Activated CD8-positive, alpha-beta T cell treated with anti-CD3 and anti-CD28 coated beads, Interleukin-2, amount 10 ng/mL, durations not matched to agents 7 days and 5 days (primary cell): ENCODE measurements at regions of chr19 and their contacts with region 1.

Region 1: DNA sequence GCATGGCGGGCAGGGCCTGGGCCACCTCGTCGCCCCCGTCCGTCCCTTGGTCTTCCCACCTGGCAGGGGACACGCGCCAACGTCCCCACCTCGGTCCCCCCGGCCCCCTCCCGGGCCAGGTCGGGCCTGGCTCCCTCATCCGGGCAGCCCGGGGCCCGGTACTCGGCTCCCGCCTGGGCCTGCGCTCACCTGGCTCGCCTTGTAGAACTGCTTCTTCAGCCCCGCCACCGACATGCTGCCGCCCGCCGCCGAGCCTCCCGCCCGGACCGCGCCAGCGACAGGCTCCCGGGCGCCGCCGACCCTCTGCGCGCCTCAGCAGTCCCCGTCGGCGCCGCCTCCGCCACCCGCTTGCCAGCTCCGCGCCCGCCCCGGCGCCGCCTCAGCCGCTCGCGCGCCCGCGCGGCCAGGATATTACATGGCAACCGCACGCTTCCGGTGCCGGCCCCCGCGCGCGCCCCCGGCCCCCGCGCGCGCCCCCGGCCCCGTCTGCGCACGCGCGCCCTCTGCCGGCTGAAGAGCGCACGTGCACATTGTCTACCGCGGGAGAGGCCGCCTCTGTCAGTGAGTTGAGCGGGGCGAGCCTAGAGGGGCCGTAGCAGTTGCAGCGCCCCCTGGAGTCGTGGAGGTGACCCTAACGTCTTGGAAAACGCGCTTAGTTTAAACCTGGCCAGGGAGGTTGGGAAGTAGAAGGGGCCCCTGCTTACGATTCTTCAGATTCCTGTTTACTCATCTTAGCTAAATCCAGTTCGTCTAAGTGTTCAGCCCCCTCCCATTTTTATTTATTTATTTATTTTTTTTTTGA is at the start of gene SH3GL1:
- DNase-seq: peak; percentile 94
- ATAC-seq: peak; percentile 66
- H3K4me3 Mint-ChIP-seq: peak within 1 kb of the TSS; percentile 95
- H3K27ac Mint-ChIP-seq: peak within 1 kb of the TSS; percentile 93
- H3K4me1 Mint-ChIP-seq: peaks cover 62% of the 10 kb centered on the region
- H3K27me3 Mint-ChIP-seq: no peaks in the 10 kb centered on the region
- total RNA-seq, gene SH3GL1: 65.1 to 67.9 TPM

Region 2: GRCh38 chr19:4342615-4343369 is 57.5 kb before region 1 on chr19:
- CTCF ChIA-PET with region 1: interaction called, 12 read pairs
- POLR2A ChIA-PET with region 1: interaction called, 9 read pairs
- DNase-seq: peak; percentile 98
- ATAC-seq: peak; percentile 92
- H3K4me3 Mint-ChIP-seq: peak overlapping the region; percentile 89
- H3K27ac Mint-ChIP-seq: peak overlapping the region; percentile 94
- H3K4me1 Mint-ChIP-seq: peaks cover 31% of the 10 kb centered on the region
- H3K27me3 Mint-ChIP-seq: no peaks in the 10 kb centered on the region

Region 3: GRCh38 chr19:4352701-4353121 is 47.6 kb before region 1 on chr19:
- CTCF ChIA-PET with region 1: interaction called, 10 read pairs
- POLR2A ChIA-PET with region 1: no interaction called
- DNase-seq: peak; percentile 77
- ATAC-seq: peak; percentile 71
- H3K4me3 Mint-ChIP-seq: no peak overlapping the region
- H3K27ac Mint-ChIP-seq: peak overlapping the region; percentile 74
- H3K4me1 Mint-ChIP-seq: no peaks in the 10 kb centered on the region
- H3K27me3 Mint-ChIP-seq: no peaks in the 10 kb centered on the region

Region 4: GRCh38 chr19:4369888-4370260 is 30.5 kb before region 1 on chr19:
- CTCF ChIA-PET with region 1: interaction called, 54 read pairs
- POLR2A ChIA-PET with region 1: interaction called, 7 read pairs
- DNase-seq: peak; percentile 87
- ATAC-seq: peak; percentile 79
- H3K4me3 Mint-ChIP-seq: peak overlapping the region; percentile 69
- H3K27ac Mint-ChIP-seq: peak overlapping the region; percentile 96
- H3K4me1 Mint-ChIP-seq: peaks cover 68% of the 10 kb centered on the region
- H3K27me3 Mint-ChIP-seq: no peaks in the 10 kb centered on the region

Region 5: GRCh38 chr19:4379355-4380253 is 20.7 kb before region 1 on chr19:
- CTCF ChIA-PET with region 1: interaction called, 10 read pairs
- POLR2A ChIA-PET with region 1: interaction called, 3 read pairs
- DNase-seq: peak; percentile 62
- ATAC-seq: peak; percentile 52
- H3K4me3 Mint-ChIP-seq: peak overlapping the region; percentile 75
- H3K27ac Mint-ChIP-seq: peak overlapping the region; percentile 93
- H3K4me1 Mint-ChIP-seq: peaks cover 77% of the 10 kb centered on the region
- H3K27me3 Mint-ChIP-seq: no peaks in the 10 kb centered on the region

Region 6: GRCh38 chr19:4471403-4472173 is 71.3 kb after region 1 on chr19:
- CTCF ChIA-PET with region 1: interaction called, 7 read pairs
- POLR2A ChIA-PET with region 1: interaction called, 11 read pairs
- DNase-seq: peak; percentile 99
- ATAC-seq: peak; percentile 93
- H3K4me3 Mint-ChIP-seq: no peak overlapping the region
- H3K27ac Mint-ChIP-seq: no peak overlapping the region
- H3K4me1 Mint-ChIP-seq: peaks cover 29% of the 10 kb centered on the region
- H3K27me3 Mint-ChIP-seq: no peaks in the 10 kb centered on the region

Region 7: DNA sequence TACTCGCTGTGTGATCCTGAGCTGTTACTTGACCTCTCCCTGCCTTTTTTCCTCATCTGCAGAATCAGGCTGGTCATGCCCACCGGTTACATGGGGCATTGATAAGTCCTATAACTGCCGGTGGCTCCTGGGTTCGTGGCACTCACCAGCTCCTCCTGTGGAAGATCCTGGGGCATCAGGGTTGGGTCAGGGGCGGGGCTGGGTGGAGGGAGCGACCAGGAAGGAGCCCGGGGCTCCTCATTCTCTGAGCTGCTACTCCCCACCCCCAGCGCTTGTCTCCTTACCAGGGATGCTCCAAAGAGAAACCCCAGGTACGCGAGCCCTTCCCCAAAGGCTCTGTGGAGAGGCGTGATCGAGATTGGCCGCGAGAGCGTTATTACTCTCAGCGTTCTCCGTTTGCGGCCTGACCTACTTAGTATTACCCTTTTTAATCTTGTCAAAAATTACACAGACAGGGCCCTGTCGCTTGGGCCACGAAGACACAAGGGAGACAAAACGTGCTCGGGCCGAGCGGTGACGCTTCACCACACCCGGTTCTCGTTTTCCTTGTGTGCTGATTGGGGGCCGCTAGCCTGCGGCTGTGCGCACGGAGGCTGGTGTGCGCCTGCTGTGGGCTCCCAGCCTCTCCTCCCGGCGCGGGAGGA is 82.5 kb after region 1 on chr19:
- CTCF ChIA-PET with region 1: no interaction called
- POLR2A ChIA-PET with region 1: no interaction called
- DNase-seq: no peak
- ATAC-seq: no peak
- H3K4me3 Mint-ChIP-seq: no peak overlapping the region
- H3K27ac Mint-ChIP-seq: no peak overlapping the region
- H3K4me1 Mint-ChIP-seq: no peaks in the 10 kb centered on the region
- H3K27me3 Mint-ChIP-seq: no peaks in the 10 kb centered on the region